Naive thymus-derived CD4-positive, alpha-beta T cell (primary cell): ENCODE measurements at regions of chr12 and their contacts with region 1.

Region 1: DNA sequence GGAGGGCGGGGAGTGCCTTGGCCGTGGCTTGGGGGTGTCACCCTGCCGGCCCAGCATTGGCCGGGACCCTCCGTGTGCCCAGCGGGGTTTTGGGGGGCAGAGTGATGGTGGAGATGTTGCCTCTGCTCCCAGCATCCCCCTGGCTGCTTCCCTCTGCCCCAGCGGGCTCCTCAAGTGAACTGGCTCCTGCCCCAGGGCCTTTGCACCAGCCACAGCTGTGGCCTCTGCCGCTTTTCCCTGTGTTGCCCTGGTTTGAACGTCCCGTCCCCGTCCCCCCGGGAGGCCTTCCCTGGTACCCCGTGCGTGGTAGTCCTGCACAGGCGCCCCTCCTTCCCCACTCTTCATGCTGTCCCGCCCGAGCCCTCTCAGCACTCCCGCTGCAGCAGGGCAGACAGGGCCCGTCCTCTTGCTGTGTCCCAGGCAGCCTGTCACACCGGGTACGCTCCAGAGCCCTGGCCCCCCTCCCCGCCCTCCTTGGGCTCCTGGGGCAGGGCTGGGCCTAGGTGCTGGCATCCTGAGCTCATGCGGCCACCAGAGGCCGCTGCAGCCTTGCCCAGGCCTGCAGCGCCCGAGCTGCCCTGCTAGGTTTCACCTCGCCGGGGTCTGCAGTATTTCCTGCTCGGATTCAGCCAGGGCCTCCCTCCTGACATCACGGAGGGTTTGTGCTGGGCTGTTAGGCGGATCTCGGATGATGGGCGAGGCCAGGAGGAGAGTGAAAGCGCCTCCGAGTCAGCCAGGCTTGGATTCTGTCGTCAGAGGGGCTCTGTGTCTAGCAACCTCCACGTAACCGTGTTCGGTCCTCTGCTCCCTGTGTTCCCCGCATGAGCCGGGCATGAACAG is 9.5 kb downstream of the NOC4L start:
- DNase-seq: peak; percentile 63 to 82 (median 76)
- ATAC-seq: peak; percentile 93
- H3K4me3 ChIP-seq: no peak overlapping the region
- H3K4me3 Mint-ChIP-seq: peak overlapping the region in 5 of 10 donors; percentile 9 to 74 (median 54)
- H3K27ac ChIP-seq: no peak overlapping the region
- H3K27ac Mint-ChIP-seq: peak overlapping the region in 2 of 9 donors; percentile 38 to 64
- H3K4me1 ChIP-seq: peaks cover 0 to 4% of the 10 kb centered on the region in 2 donors
- H3K4me1 Mint-ChIP-seq: peaks cover 0 to 4% (median 0%) of the 10 kb centered on the region in 7 donors
- H3K27me3 ChIP-seq: no peaks in the 10 kb centered on the region
- H3K27me3 Mint-ChIP-seq: no peaks in the 10 kb centered on the region

Region 2: GRCh38 chr12:131793243-131794022 is 360.3 kb before region 1 on chr12:
- CTCF ChIA-PET with region 1: no interaction called
- POLR2A ChIA-PET with region 1: no interaction called
- intact Hi-C with region 1: no loop called
- DNase-seq: no peak
- ATAC-seq: no peak
- H3K4me3 ChIP-seq: no peak overlapping the region
- H3K4me3 Mint-ChIP-seq: no peak overlapping the region
- H3K27ac ChIP-seq: no peak overlapping the region
- H3K27ac Mint-ChIP-seq: peak overlapping the region in 1 of 9 donors; percentile 22
- H3K4me1 ChIP-seq: no peaks in the 10 kb centered on the region
- H3K4me1 Mint-ChIP-seq: peaks cover 0 to 6% (median 0%) of the 10 kb centered on the region in 7 donors
- H3K27me3 ChIP-seq: no peaks in the 10 kb centered on the region
- H3K27me3 Mint-ChIP-seq: no peaks in the 10 kb centered on the region

Region 3: DNA sequence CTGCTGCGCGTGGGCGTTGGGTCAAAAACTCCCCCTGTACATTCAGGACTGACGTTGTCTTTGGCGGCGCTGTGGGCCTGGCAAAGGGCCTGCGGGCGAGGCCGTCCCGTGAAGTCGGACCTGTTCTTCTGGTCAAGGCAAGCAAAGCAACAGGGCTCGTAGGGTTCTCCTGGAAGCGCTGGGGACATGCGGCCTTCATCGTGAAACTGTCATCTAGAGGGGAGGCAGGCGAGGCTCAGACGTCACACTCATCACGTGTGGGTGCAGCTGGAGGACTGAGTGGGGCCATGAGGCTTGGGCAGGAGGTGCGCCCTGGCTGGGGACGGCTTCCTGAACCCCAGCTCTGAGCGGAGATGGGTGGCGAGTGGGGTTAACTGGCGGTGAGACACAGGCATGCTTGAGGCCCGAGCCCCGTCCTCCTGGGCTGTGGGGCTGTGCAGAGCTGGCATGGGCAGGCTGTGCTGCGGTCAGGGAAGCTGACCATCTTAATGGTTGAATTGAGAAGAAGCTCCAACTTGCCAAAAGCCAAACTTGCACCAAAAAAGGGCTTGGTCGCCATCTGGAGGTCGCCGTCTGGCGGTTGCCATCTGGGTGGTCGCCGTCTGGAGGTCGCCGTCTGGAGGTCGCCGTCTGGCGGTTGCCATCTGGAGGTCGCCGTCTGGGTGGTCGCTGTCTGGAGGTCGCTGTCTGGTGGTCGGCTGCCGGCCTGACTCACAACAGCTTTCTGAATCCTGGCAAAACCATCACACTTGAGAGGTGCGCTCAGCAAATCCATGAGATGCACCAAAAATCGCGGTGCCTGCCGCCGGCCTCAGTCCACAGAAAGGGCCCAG is 56.7 kb after region 1 on chr12:
- CTCF ChIA-PET with region 1: interaction called, 6 read pairs
- POLR2A ChIA-PET with region 1: no interaction called
- intact Hi-C with region 1: loop called in 1 of 2 experiments (anchors 1 kb)
- DNase-seq: no peak
- ATAC-seq: no peak
- H3K4me3 ChIP-seq: no peak overlapping the region
- H3K4me3 Mint-ChIP-seq: no peak overlapping the region
- H3K27ac ChIP-seq: no peak overlapping the region
- H3K27ac Mint-ChIP-seq: no peak overlapping the region
- H3K4me1 ChIP-seq: peaks cover 3 to 7% of the 10 kb centered on the region in 2 donors
- H3K4me1 Mint-ChIP-seq: peaks cover 0 to 5% (median 0%) of the 10 kb centered on the region in 7 donors
- H3K27me3 ChIP-seq: peaks cover 0 to 5% of the 10 kb centered on the region in 2 donors
- H3K27me3 Mint-ChIP-seq: peaks cover 5 to 15% (median 11%) of the 10 kb centered on the region in 5 donors

Region 4: GRCh38 chr12:132264086-132265010 is 110.6 kb after region 1 on chr12:
- CTCF ChIA-PET with region 1: interaction called, 5 read pairs
- POLR2A ChIA-PET with region 1: no interaction called
- intact Hi-C with region 1: loop called in 1 of 2 experiments (anchors 5 kb)
- DNase-seq: no peak
- ATAC-seq: no peak
- H3K4me3 ChIP-seq: no peak overlapping the region
- H3K4me3 Mint-ChIP-seq: no peak overlapping the region
- H3K27ac ChIP-seq: no peak overlapping the region
- H3K27ac Mint-ChIP-seq: no peak overlapping the region
- H3K4me1 ChIP-seq: no peaks in the 10 kb centered on the region
- H3K4me1 Mint-ChIP-seq: no peaks in the 10 kb centered on the region
- H3K27me3 ChIP-seq: no peaks in the 10 kb centered on the region
- H3K27me3 Mint-ChIP-seq: no peaks in the 10 kb centered on the region

Region 5: DNA sequence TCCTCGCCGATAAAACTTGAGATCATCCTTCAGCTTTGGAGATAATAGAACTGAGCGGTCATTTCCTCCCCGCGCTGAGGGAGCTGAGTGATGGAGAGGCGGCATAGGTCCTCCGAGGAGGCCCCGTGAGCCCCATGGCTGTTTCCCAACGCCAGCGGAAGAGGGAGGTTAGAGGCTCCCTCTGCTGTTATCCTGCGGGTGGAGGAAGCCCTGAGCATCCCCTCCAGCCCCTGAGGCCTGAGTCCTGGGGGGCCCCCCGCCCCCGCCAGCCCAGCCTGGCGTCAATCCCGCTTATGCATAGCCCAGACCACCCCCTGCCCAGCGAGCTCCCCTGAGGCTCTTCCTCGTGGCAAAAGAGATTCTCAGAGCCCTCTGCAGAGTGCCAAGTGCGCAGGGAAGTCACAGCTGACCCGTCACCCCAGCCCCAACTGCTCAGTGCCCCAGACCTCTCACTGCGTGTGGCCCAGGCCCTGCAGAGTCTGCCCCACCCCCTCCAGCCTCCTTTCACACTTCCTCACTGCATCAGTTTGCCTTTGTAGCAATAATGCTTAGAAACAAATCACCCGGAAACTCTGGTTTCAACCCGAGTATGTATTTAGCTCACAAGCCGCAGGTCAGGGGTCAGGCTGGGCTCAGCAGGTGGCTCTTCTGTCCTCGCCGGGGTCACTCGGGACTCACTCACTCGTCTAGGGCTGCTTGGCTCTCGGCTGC is 220.3 kb after region 1 on chr12:
- CTCF ChIA-PET with region 1: interaction called, 5 read pairs
- POLR2A ChIA-PET with region 1: no interaction called
- intact Hi-C with region 1: loop called in 1 of 2 experiments (anchors 1 kb)
- DNase-seq: no peak
- ATAC-seq: no peak
- H3K4me3 ChIP-seq: no peak overlapping the region
- H3K4me3 Mint-ChIP-seq: no peak overlapping the region
- H3K27ac ChIP-seq: no peak overlapping the region
- H3K27ac Mint-ChIP-seq: no peak overlapping the region
- H3K4me1 ChIP-seq: no peaks in the 10 kb centered on the region
- H3K4me1 Mint-ChIP-seq: peaks cover 0 to 9% (median 0%) of the 10 kb centered on the region in 7 donors
- H3K27me3 ChIP-seq: peaks cover 0 to 8% of the 10 kb centered on the region in 2 donors
- H3K27me3 Mint-ChIP-seq: peaks cover 33 to 83% (median 61%) of the 10 kb centered on the region in 5 donors

Region 6: GRCh38 chr12:132523576-132524331 is 370.0 kb after region 1 on chr12:
- CTCF ChIA-PET with region 1: interaction called, 4 read pairs
- POLR2A ChIA-PET with region 1: no interaction called
- intact Hi-C with region 1: loop called in 1 of 2 experiments (anchors 2 kb)
- DNase-seq: peak; percentile 48 to 81 (median 70)
- ATAC-seq: peak; percentile 78
- H3K4me3 ChIP-seq: no peak overlapping the region
- H3K4me3 Mint-ChIP-seq: no peak overlapping the region
- H3K27ac ChIP-seq: no peak overlapping the region
- H3K27ac Mint-ChIP-seq: peak overlapping the region in 1 of 9 donors; percentile 9
- H3K4me1 ChIP-seq: peaks cover 3 to 7% of the 10 kb centered on the region in 2 donors
- H3K4me1 Mint-ChIP-seq: peaks cover 0 to 16% (median 9%) of the 10 kb centered on the region in 7 donors
- H3K27me3 ChIP-seq: no peaks in the 10 kb centered on the region
- H3K27me3 Mint-ChIP-seq: no peaks in the 10 kb centered on the region

Region 7: GRCh38 chr12:132614861-132615578 is 461.3 kb after region 1 on chr12:
- CTCF ChIA-PET with region 1: interaction called, 3 read pairs
- POLR2A ChIA-PET with region 1: no interaction called
- intact Hi-C with region 1: loop called in 1 of 2 experiments (anchors 5 kb)
- DNase-seq: peak; percentile 59 to 84 (median 77)
- ATAC-seq: peak; percentile 89
- H3K4me3 ChIP-seq: no peak overlapping the region
- H3K4me3 Mint-ChIP-seq: peak overlapping the region in 2 of 10 donors; percentile 3 to 49
- H3K27ac ChIP-seq: no peak overlapping the region
- H3K27ac Mint-ChIP-seq: peak overlapping the region in 1 of 9 donors; percentile 19
- H3K4me1 ChIP-seq: peaks cover 0 to 12% of the 10 kb centered on the region in 2 donors
- H3K4me1 Mint-ChIP-seq: peaks cover 5 to 23% (median 18%) of the 10 kb centered on the region in 7 donors
- H3K27me3 ChIP-seq: peaks cover 4 to 19% of the 10 kb centered on the region in 2 donors
- H3K27me3 Mint-ChIP-seq: peaks cover 31 to 44% (median 40%) of the 10 kb centered on the region in 5 donors